Thyroid gland (tissue), 4 donors: ENCODE measurements at regions of chr2 and their contacts with region 1.

Region 1: GRCh38 chr2:202178342-202178958 is 59.9 kb downstream of the SUMO1 start:
- DNase-seq: peak; percentile 52
- H3K4me3 ChIP-seq: no peak overlapping the region
- H3K27ac ChIP-seq: no peak overlapping the region
- H3K4me1 ChIP-seq: no peaks in the 10 kb centered on the region
- H3K27me3 ChIP-seq: no peaks in the 10 kb centered on the region
- CTCF ChIP-seq: peak; percentile 41 to 85 (median 75)
- POLR2A ChIP-seq: no peak

Region 2: GRCh38 chr2:201860636-201861066 is 317.8 kb before region 1 on chr2:
- intact Hi-C with region 1: loop called (anchors 2 kb)
- DNase-seq: peak; percentile 28 to 39
- H3K4me3 ChIP-seq: no peak overlapping the region
- H3K27ac ChIP-seq: no peak overlapping the region
- H3K4me1 ChIP-seq: no peaks in the 10 kb centered on the region
- H3K27me3 ChIP-seq: no peaks in the 10 kb centered on the region
- CTCF ChIP-seq: peak in 5 of 6 experiments; percentile 46 to 87 (median 77)
- POLR2A ChIP-seq: no peak